Sigmoid colon (tissue), 7 donors: ENCODE measurements at regions of chr6 and their contacts with region 1.

Region 1: GRCh38 chr6:13873285-13874190 is 51.2 kb upstream of the RNF182 start:
- DNase-seq: peak; percentile 72
- H3K4me3 ChIP-seq: peak overlapping the region; percentile 16 to 52 (median 44)
- H3K27ac ChIP-seq: no peak overlapping the region
- H3K4me1 ChIP-seq: peaks cover 0 to 12% (median 10%) of the 10 kb centered on the region in 4 donors
- H3K27me3 ChIP-seq: no peaks in the 10 kb centered on the region
- CTCF ChIP-seq: peak in 3 of 4 experiments; percentile 39 to 56 (median 45)
- EP300 ChIP-seq: no peak
- POLR2A ChIP-seq: no peak

Region 2: GRCh38 chr6:13538084-13538483 is 335.5 kb before region 1 on chr6:
- intact Hi-C with region 1: no loop called
- DNase-seq: no peak
- H3K4me3 ChIP-seq: no peak overlapping the region
- H3K27ac ChIP-seq: no peak overlapping the region
- H3K4me1 ChIP-seq: no peaks in the 10 kb centered on the region
- H3K27me3 ChIP-seq: no peaks in the 10 kb centered on the region
- CTCF ChIP-seq: peak; percentile 40 to 46 (median 44)
- EP300 ChIP-seq: no peak
- POLR2A ChIP-seq: no peak

Region 3: DNA sequence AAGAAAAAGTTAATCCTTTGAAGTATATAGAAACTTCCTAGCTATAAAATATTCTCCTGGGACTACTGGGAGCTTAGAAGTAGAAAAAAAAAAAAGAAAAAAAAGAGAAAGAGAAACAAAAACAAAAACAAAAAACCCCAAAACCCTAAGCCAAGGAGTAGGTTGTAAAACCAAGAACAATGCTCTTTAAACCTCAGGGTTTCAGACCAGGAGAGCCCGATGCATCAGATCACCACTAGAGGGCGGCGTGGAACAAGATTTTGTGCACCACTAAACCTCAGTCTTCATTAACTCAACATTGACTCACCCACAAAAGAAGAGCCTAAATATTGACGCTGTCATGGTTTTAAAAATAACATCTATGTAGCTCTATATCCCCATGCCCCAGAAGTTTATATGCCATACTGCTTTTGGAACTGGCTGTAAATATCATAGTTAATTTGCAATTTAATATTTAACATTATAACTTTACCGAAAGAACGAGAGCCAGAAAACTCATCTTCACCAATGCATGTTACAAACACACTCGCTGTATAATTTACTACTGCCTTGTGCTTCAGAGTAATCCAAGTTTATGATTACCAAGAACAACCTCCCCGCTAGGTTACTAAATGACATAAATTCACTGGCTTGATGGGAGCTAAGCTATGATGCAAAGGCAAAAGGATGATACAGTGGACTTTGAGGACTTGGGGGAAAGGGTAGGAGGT is 78.3 kb before region 1 on chr6:
- intact Hi-C with region 1: no loop called
- DNase-seq: peak; percentile 90
- H3K4me3 ChIP-seq: no peak overlapping the region
- H3K27ac ChIP-seq: peak overlapping the region in 3 of 4 donors; percentile 8 to 48 (median 37)
- H3K4me1 ChIP-seq: peaks cover 0 to 5% (median 0%) of the 10 kb centered on the region in 4 donors
- H3K27me3 ChIP-seq: no peaks in the 10 kb centered on the region
- CTCF ChIP-seq: peak; percentile 68 to 89 (median 88)
- EP300 ChIP-seq: no peak
- POLR2A ChIP-seq: no peak

Region 4: GRCh38 chr6:13814176-13814937 is 59.2 kb before region 1 on chr6 and contains the start of gene MCUR1:
- intact Hi-C with region 1: loop called (anchors 5 kb)
- DNase-seq: peak; percentile 93
- H3K4me3 ChIP-seq: peak within 1 kb of the TSS; percentile 79 to 86 (median 82)
- H3K27ac ChIP-seq: peak within 1 kb of the TSS; percentile 92 to 99 (median 98)
- H3K4me1 ChIP-seq: peaks cover 0 to 39% (median 36%) of the 10 kb centered on the region in 4 donors
- H3K27me3 ChIP-seq: no peaks in the 10 kb centered on the region
- CTCF ChIP-seq: no peak
- EP300 ChIP-seq: no peak
- POLR2A ChIP-seq: no peak
- total RNA-seq, gene MCUR1: 7.2 to 13.2 (median 9.0) TPM